ENCODE measurements at regions of chr11 and their contacts with region 1.

Region 1: DNA sequence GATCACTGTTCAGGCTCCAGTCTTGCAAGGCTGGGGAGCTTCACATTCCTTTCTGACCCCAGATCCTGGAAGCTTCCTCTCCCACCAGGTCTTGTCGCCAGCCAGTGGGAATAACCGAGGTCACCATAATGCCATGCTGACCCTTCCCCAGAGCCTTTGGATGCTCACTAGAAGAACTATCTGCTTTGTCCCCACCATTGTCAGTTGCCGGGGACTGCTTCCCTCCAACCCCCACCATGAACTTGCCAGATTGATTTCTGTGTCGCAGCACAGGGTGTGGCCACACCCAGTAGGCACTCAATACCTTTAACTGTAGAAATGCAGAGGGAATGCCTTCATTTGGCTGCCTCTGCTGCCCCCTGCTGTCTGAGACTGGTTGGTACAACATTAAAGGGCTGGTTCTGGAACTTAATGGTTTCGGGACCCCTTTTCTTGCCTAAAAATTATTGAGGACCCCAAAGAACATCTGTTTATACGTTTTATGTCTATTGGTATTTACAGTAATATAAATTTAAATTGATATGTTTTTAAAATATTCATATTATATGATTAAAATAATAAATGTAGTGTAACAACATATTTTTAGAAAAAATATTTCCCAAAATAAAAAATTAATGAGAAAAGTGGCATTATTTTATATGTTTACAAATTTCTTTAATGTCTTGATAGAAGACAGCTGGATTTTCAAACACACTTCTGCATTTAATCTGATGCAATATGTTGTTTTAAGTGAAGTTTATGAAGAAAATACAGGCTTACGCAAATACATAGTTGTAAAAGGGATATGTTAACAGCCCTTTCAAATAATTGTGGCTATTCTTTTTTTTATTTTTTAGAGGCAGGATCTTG is 6.7 kb upstream of the GDPD5 start:
- DNase-seq: peak; percentile 85
- H3K4me3 Mint-ChIP-seq: no peak overlapping the region
- H3K27ac Mint-ChIP-seq: no peak overlapping the region
- H3K4me1 Mint-ChIP-seq: peaks cover 14% of the 10 kb centered on the region
- H3K27me3 Mint-ChIP-seq: peaks cover 26% of the 10 kb centered on the region
- CTCF ChIP-seq: peak; percentile 85

Region 2: DNA sequence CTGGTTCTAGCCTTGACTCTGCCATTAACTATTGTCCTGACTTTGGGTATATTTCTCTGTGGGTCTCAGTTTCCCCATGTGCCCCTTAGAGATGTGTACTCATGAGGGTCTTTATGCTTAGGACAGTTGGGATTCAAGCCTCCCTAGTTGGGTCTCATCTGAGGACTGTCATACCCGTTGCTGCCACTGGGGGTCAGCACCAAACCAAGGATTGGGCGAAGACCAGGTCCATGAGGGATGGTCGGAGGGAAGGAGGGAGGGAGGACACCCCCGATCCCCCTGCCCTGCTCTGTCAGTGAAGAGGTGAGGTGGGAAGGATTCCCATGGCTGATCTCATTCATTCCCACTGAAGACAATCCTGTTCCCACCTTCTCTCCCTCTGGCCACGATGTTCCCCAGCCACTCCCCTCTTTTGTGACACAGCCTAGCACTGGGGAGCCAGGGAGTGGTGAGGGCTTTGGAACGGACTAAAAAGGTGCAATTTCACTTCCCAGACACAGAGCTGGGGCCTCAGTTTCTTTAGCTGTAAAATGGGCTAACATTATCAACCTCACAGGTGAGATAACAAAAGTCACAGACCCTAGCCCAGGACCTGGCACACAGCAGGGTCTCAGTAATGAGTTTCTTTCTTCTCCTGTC is 87.0 kb before region 1 on chr11:
- CTCF ChIA-PET with region 1: interaction called, 21 read pairs
- intact Hi-C with region 1: loop called (anchors 1 kb)
- DNase-seq: peak; percentile 80
- H3K4me3 Mint-ChIP-seq: no peak overlapping the region
- H3K27ac Mint-ChIP-seq: no peak overlapping the region
- H3K4me1 Mint-ChIP-seq: no peaks in the 10 kb centered on the region
- H3K27me3 Mint-ChIP-seq: peaks cover 35% of the 10 kb centered on the region
- CTCF ChIP-seq: peak; percentile 97

Region 3: GRCh38 chr11:75667831-75668450 is 135.5 kb after region 1 on chr11:
- CTCF ChIA-PET with region 1: no interaction called
- intact Hi-C with region 1: no loop called
- DNase-seq: peak; percentile 44
- H3K4me3 Mint-ChIP-seq: peak overlapping the region; percentile 64
- H3K27ac Mint-ChIP-seq: no peak overlapping the region
- H3K4me1 Mint-ChIP-seq: peaks cover 11% of the 10 kb centered on the region
- H3K27me3 Mint-ChIP-seq: peaks cover 99% of the 10 kb centered on the region
- CTCF ChIP-seq: no peak

Measured in Calu3 (cell line).